ENCODE measurements at regions of chr1 and their contacts with region 1.

Region 1: DNA sequence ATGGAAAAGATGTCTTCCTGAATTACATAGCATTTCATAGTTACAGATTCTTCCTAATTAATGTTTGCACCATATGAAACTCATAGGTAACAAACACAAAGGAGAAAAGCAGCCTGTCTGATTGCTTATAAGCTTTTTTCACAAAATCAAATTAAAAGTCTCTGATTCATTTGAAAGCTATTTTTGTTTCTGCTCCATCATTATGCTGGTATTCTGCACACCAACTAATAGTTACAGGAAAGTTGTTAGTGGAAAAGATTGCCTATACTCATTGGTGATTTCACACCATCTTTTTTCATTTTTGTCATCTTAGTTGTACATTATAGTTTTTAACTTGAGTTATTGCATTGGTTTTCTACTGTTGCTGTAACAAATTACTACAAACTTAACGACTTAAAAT is 70.0 kb downstream of the PRKAA2 start:
- DNase-seq: peak in 1 of 2 experiments; percentile 39
- H3K4me3 ChIP-seq: no peak overlapping the region
- H3K27ac ChIP-seq: no peak overlapping the region
- H3K4me1 ChIP-seq: peaks cover 13% of the 10 kb centered on the region
- H3K27me3 ChIP-seq: no peaks in the 10 kb centered on the region
- CTCF ChIP-seq: no peak

Region 2: GRCh38 chr1:56000424-56000823 is 714.7 kb before region 1 on chr1:
- CTCF ChIA-PET with region 1: no interaction called
- POLR2A ChIA-PET with region 1: interaction called, 11 read pairs
- intact Hi-C with region 1: no loop called
- DNase-seq: no peak
- H3K4me3 ChIP-seq: no peak overlapping the region
- H3K27ac ChIP-seq: no peak overlapping the region
- H3K4me1 ChIP-seq: no peaks in the 10 kb centered on the region
- H3K27me3 ChIP-seq: no peaks in the 10 kb centered on the region
- CTCF ChIP-seq: no peak

Region 3: GRCh38 chr1:56676571-56677035 is 38.6 kb before region 1 on chr1:
- CTCF ChIA-PET with region 1: no interaction called
- POLR2A ChIA-PET with region 1: no interaction called
- intact Hi-C with region 1: no loop called
- DNase-seq: peak in 1 of 2 experiments; percentile 50
- H3K4me3 ChIP-seq: no peak overlapping the region
- H3K27ac ChIP-seq: no peak overlapping the region
- H3K4me1 ChIP-seq: no peaks in the 10 kb centered on the region
- H3K27me3 ChIP-seq: no peaks in the 10 kb centered on the region
- CTCF ChIP-seq: no peak

Measured in PC-9 (cell line).